Endothelial cell of umbilical vein (primary cell): ENCODE measurements at regions of chr5 and their contacts with region 1.

Region 1: GRCh38 chr5:148730943-148731861 is 76.9 kb upstream of the HTR4 start:
- DNase-seq: peak; percentile 89
- H3K4me3 ChIP-seq: no peak overlapping the region
- H3K27ac ChIP-seq: no peak overlapping the region
- H3K4me1 ChIP-seq: peaks cover 23% of the 10 kb centered on the region
- H3K27me3 ChIP-seq: no peaks in the 10 kb centered on the region
- CTCF ChIP-seq: peak; percentile 78 to 82
- POLR2A ChIP-seq: no peak

Region 2: DNA sequence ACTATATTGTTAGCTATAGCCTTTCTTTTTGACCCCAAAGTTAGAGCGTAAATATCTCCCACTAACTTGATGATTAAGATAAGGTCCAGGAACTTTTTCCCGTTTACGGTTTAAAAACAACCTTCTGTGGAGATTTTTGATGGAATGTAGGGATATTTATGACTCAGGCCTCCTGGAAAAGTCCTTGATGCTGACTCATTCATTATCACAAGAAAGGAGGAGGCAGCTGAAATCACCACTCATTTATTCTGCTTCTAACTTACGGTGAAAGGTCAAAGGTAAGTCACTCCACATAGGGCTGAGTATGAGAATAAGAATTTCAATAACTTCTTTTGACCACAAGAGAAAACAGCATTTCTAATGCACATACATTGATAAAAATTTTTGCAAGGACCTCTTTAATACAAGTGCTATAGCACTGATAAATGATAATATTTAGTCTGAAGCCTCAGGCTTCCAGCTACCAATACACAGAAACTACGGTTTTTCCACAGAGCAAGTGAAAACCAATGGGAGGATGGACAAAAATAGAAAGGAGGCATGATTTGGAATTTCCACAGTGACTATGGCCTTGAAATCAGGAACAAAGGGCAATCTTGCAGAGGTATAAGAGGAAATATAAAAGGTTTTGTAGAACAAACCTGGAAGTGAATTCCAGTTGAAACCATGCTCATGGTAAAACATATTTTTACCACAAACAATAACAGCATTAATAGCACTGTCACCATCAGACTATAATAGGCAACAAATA is 1999.1 kb before region 1 on chr5:
- CTCF ChIA-PET with region 1: no interaction called
- POLR2A ChIA-PET with region 1: no interaction called
- dilution Hi-C with region 1: no loop called
- intact Hi-C with region 1: no loop called
- DNase-seq: peak; percentile 92
- H3K4me3 ChIP-seq: peak overlapping the region in 1 of 3 experiments; percentile 23
- H3K27ac ChIP-seq: peak overlapping the region; percentile 81
- H3K4me1 ChIP-seq: peaks cover 34% of the 10 kb centered on the region
- H3K27me3 ChIP-seq: no peaks in the 10 kb centered on the region
- CTCF ChIP-seq: no peak
- POLR2A ChIP-seq: no peak

Region 3: GRCh38 chr5:147949711-147950573 is 781.3 kb before region 1 on chr5:
- CTCF ChIA-PET with region 1: interaction called, 27 read pairs
- POLR2A ChIA-PET with region 1: no interaction called
- dilution Hi-C with region 1: no loop called
- intact Hi-C with region 1: loop called (anchors 2 kb)
- DNase-seq: peak; percentile 63
- H3K4me3 ChIP-seq: no peak overlapping the region
- H3K27ac ChIP-seq: no peak overlapping the region
- H3K4me1 ChIP-seq: no peaks in the 10 kb centered on the region
- H3K27me3 ChIP-seq: no peaks in the 10 kb centered on the region
- CTCF ChIP-seq: peak; percentile 40
- POLR2A ChIP-seq: no peak

Region 4: DNA sequence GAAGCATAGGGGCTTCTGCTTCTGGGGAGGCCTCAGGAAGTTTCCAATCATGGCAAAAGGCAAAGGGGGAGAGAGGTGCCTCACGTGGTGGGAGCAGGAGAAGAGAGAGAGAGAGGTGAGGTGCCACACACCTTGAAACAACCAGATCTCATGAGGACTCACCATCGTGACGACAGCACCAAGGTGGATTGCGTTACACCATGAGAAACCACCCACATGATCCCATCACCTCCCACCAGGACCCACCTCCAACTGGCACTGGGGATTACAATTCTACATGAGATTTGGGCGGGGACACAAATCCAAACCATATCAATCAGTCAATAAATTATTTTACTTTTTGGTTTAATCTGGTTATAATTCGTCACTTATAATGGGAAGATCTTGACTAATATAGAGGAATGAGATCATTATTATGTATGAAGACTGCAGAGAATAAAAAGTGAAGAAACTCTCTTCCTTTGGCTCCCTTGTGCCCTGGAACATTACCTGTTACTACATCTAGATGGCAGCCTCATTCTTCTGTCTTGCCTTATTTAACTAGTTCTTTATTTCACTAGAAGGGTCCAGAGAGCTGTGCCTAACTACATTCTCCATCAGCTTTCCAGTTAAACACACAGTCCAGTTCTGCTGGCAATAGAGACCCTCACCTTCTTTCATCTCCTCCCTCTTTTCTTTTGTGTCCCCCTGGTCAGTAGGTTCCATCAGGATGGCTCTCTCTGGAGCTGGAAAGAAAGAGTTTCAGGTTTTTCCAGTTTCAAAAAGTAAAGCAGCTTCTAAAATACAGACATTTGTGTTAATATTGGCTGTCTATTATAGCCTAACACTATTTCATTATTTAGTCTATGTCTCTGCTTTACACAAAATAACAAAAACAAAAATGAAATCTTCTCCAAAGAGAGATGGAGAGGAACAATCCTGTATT is 440.7 kb before region 1 on chr5:
- CTCF ChIA-PET with region 1: interaction called, 66 read pairs
- POLR2A ChIA-PET with region 1: no interaction called
- dilution Hi-C with region 1: no loop called
- intact Hi-C with region 1: loop called (anchors 1 kb)
- DNase-seq: peak; percentile 36
- H3K4me3 ChIP-seq: no peak overlapping the region
- H3K27ac ChIP-seq: no peak overlapping the region
- H3K4me1 ChIP-seq: no peaks in the 10 kb centered on the region
- H3K27me3 ChIP-seq: no peaks in the 10 kb centered on the region
- CTCF ChIP-seq: peak; percentile 24 to 42
- POLR2A ChIP-seq: no peak

Region 5: DNA sequence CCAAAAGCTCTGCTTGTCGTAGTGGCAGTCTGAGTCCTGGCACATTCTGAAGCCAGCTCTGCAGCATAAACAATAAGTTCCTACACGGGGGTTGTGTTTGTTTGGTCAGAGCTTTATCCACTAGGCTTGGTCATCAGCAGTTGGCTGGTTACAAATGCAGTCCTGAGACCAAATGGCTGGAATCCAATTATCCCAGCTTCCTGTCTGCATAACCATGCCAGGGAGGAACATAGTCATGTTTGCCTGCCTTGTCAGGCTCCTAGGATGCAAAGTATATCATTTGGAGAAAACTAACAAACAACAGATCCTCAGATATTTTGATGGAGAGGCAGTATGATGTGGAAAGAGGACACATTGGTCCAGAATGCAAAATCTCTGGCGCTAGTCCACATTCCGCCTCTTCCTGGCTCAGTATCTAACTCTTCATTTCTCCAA is 261.7 kb before region 1 on chr5:
- CTCF ChIA-PET with region 1: interaction called, 20 read pairs
- POLR2A ChIA-PET with region 1: no interaction called
- dilution Hi-C with region 1: no loop called
- intact Hi-C with region 1: no loop called
- DNase-seq: peak; percentile 92
- H3K4me3 ChIP-seq: no peak overlapping the region
- H3K27ac ChIP-seq: peak overlapping the region; percentile 82
- H3K4me1 ChIP-seq: peaks cover 55% of the 10 kb centered on the region
- H3K27me3 ChIP-seq: no peaks in the 10 kb centered on the region
- CTCF ChIP-seq: no peak
- POLR2A ChIP-seq: no peak

Region 6: GRCh38 chr5:148719605-148720004 is 11.6 kb before region 1 on chr5:
- CTCF ChIA-PET with region 1: interaction called, 16 read pairs
- POLR2A ChIA-PET with region 1: no interaction called
- dilution Hi-C with region 1: no loop called
- intact Hi-C with region 1: no loop called
- DNase-seq: no peak
- H3K4me3 ChIP-seq: no peak overlapping the region
- H3K27ac ChIP-seq: no peak overlapping the region
- H3K4me1 ChIP-seq: no peaks in the 10 kb centered on the region
- H3K27me3 ChIP-seq: peaks cover 5 to 10% of the 10 kb centered on the region in 2 experiments
- CTCF ChIP-seq: no peak
- POLR2A ChIP-seq: no peak

Region 7: GRCh38 chr5:148794729-148795561 is 63.7 kb after region 1 on chr5:
- CTCF ChIA-PET with region 1: no interaction called
- POLR2A ChIA-PET with region 1: no interaction called
- dilution Hi-C with region 1: no loop called
- intact Hi-C with region 1: no loop called
- DNase-seq: no peak
- H3K4me3 ChIP-seq: no peak overlapping the region
- H3K27ac ChIP-seq: no peak overlapping the region
- H3K4me1 ChIP-seq: no peaks in the 10 kb centered on the region
- H3K27me3 ChIP-seq: no peaks in the 10 kb centered on the region
- CTCF ChIP-seq: no peak
- POLR2A ChIP-seq: no peak

Region 8: DNA sequence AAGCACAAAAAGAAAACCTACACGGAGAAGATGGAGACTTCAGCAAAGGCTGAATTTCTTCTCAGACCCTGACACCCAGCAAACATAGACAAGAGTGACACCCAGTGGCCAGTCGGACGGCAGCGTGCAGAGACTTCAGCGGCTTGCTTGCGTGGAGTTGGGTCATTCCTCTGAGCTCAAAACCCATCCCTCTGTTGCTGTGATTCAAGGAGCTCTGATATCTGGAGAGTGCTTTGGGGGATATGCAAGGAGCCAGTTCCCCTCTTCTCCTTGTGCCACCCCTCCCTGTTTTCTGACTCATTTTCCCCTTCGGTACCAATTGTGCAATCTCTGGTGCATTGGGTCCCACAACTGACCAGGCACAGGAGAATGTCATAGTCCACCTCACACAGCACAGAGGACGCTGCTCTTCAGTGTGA is 304.2 kb after region 1 on chr5:
- CTCF ChIA-PET with region 1: interaction called, 260 read pairs
- POLR2A ChIA-PET with region 1: no interaction called
- dilution Hi-C with region 1: no loop called
- intact Hi-C with region 1: loop called (anchors 1 kb)
- DNase-seq: peak; percentile 73
- H3K4me3 ChIP-seq: no peak overlapping the region
- H3K27ac ChIP-seq: no peak overlapping the region
- H3K4me1 ChIP-seq: peaks cover 39% of the 10 kb centered on the region
- H3K27me3 ChIP-seq: no peaks in the 10 kb centered on the region
- CTCF ChIP-seq: peak; percentile 87 to 88
- POLR2A ChIP-seq: no peak